GM10248 (cell line): ENCODE measurements at regions of chr2 and their contacts with region 1.

Region 1: DNA sequence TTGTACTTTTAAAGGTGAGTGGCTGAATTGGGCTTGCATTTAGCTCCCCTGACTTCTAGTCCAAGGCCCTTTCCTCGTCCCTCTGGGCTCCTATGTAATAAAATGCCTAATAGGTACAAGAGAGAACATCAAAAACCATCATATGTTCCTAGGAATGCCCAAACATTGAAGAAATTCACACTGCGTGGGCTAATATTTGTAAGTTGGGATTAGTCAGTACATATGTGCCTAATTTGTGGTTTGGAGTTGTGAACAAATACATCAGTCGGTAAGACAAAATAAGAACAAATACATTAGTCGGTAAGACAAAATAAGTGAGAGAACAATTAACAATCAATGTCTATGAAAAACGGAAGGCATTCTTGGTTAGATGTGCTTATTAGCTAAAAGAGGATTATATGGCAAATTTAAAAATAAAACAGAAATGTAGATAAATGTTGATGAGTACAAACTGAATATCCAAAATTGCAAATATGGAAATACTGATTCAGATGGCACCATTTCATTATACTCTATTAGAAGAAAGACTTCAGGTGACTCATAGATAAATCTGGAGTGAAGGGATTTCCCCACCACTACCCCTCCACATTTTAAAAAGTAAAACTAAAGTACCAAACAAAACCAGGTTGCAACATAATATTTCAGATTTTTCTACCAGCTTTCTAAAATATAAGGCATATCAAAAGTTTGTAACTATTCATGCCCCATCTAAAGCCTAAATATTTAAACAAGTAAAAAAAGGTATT is 325.4 kb downstream of the ZEB2 start:
- DNase-seq: peak; percentile 9
- CTCF ChIP-seq: no peak

Region 2: GRCh38 chr2:144183727-144184126 is 10.8 kb before region 1 on chr2:
- CTCF ChIA-PET with region 1: interaction called, 18 read pairs
- POLR2A ChIA-PET with region 1: no interaction called
- DNase-seq: peak; percentile 22
- CTCF ChIP-seq: no peak

Region 3: DNA sequence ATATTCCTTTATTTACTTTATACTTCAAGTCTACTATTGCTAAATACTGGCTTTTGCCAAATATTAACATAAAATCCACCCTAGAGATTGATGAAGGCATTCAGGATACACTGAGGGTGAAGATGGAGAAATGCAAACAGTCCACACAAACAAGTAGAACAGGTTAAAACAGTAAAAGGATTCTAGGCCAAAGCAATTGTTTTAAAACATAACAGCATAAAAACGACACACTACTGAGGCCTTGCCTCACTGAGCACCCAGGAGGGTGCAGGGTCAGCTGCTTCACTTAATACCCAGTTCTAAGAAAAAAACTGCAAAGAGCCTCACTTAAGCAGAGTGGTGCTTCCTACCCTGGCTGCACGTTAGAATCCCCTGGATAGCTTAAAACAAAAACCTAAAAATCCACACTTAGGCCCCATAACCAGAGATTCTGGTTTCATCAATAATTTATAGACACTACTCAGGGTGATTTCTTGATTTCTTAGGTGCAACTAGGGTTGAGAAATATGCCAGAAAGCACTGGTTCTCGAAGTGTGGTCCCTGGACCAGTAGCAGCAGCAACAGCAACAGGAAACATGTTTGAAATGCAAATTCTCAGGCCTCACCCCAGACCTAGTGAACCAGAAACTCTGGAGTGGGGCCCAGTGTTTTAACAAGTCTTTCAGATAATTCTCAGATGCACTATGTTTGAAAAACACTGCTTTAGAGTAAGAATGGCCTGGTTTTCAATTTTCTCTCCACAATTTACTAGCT is 46.3 kb after region 1 on chr2:
- CTCF ChIA-PET with region 1: no interaction called
- POLR2A ChIA-PET with region 1: no interaction called
- DNase-seq: no peak
- CTCF ChIP-seq: no peak